ENCODE measurements at regions of chr9 and their contacts with region 1.

Region 1: GRCh38 chr9:2014696-2015580 is at the start of gene SMARCA2:
- DNase-seq: peak; percentile 95 to 98 (median 97)
- H3K4me3 ChIP-seq: peak within 1 kb of the TSS; percentile 92
- H3K4me3 Mint-ChIP-seq: peak within 1 kb of the TSS; percentile 96 to 100 (median 99)
- H3K27ac ChIP-seq: peak within 1 kb of the TSS; percentile 91
- H3K27ac Mint-ChIP-seq: peak within 1 kb of the TSS; percentile 96 to 100 (median 99)
- H3K4me1 ChIP-seq: peaks cover 19% of the 10 kb centered on the region
- H3K4me1 Mint-ChIP-seq: peaks cover 25 to 41% (median 35%) of the 10 kb centered on the region in 3 donors
- H3K27me3 ChIP-seq: no peaks in the 10 kb centered on the region
- H3K27me3 Mint-ChIP-seq: peaks cover 4% of the 10 kb centered on the region in 2 donors
- total RNA-seq, gene SMARCA2: 145 to 156 TPM

Region 2: DNA sequence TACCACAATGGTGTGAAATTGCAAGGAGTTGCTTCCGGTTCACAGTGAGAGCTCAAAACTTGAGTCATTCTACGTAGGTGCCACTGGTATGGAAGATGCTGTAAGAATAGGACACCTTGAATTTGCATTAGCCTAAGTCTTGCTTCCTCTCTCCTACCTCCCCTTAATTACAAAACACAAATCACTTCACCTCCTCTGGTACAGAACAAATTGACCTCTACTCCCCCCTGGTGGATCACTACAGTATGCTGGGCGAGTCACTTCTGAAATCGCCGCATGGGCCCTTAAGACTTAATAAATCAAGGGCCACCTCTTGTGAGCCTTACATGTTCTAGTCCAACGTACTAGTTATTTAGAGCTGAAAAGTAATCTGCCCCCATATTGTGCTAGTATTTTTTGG is 145.1 kb before region 1 on chr9:
- CTCF ChIA-PET with region 1: no interaction called
- POLR2A ChIA-PET with region 1: no interaction called
- DNase-seq: peak in 1 of 5 donors; percentile 8
- H3K4me3 ChIP-seq: no peak overlapping the region
- H3K4me3 Mint-ChIP-seq: no peak overlapping the region
- H3K27ac ChIP-seq: no peak overlapping the region
- H3K27ac Mint-ChIP-seq: no peak overlapping the region
- H3K4me1 ChIP-seq: no peaks in the 10 kb centered on the region
- H3K4me1 Mint-ChIP-seq: peaks cover 1 to 16% (median 9%) of the 10 kb centered on the region in 3 donors
- H3K27me3 ChIP-seq: no peaks in the 10 kb centered on the region
- H3K27me3 Mint-ChIP-seq: peaks cover 0 to 1% of the 10 kb centered on the region in 2 donors

Region 3: DNA sequence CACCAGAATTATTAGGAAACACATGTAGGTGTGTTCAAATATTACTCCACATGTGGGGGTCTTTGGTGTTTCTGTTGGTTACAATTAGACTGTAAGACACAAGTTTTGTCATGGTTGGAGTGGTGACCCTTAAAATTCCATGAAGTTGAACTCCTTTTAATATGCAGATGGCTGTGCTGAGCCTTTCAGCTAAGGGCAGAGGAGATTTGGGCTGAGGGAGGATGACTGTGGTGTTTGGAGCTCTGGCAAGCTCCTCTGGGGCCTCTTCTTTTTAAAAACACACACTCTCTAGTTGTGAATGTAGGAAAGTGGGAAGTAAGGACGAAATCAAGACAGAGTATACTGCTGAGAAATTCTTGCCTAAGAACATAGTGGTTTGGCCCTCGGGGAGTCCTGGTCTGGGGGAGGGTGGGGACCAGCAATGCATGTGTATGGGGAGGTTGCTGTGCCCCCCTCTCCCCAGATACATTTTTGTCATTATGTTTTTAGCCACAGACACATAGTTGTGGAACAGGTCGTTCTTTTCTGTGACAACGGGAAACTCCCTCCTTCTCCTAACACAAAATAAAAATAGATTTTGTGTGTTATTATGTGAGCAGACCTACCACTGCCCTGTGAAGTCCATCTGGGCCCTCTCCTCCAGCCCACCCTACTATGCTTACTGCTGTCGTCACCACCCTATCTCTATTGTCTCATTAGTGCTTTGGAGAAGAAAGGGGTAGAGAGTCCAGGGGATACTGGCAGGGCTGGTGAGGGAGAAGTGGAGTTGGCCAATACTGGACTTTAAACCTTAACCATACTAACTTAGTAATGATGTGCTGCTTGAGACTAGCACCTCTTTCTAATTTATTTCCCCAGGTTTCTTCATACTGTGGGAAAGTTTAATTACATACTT is 10.2 kb after region 1 on chr9:
- CTCF ChIA-PET with region 1: interaction called, 3 read pairs
- POLR2A ChIA-PET with region 1: interaction called, 28 read pairs
- DNase-seq: no peak
- H3K4me3 ChIP-seq: no peak overlapping the region
- H3K4me3 Mint-ChIP-seq: peak overlapping the region; percentile 30 to 80 (median 47)
- H3K27ac ChIP-seq: no peak overlapping the region
- H3K27ac Mint-ChIP-seq: peak overlapping the region; percentile 83 to 97 (median 94)
- H3K4me1 ChIP-seq: peaks cover 92% of the 10 kb centered on the region
- H3K4me1 Mint-ChIP-seq: peaks cover 98 to 100% (median 100%) of the 10 kb centered on the region in 3 donors
- H3K27me3 ChIP-seq: no peaks in the 10 kb centered on the region
- H3K27me3 Mint-ChIP-seq: no peaks in the 10 kb centered on the region

Region 4: GRCh38 chr9:2053883-2054845 is 39.2 kb after region 1 on chr9:
- CTCF ChIA-PET with region 1: interaction called, 11 read pairs
- POLR2A ChIA-PET with region 1: interaction called, 44 read pairs
- DNase-seq: peak; percentile 46 to 85 (median 82)
- H3K4me3 ChIP-seq: no peak overlapping the region
- H3K4me3 Mint-ChIP-seq: peak overlapping the region; percentile 3 to 75 (median 68)
- H3K27ac ChIP-seq: peak overlapping the region; percentile 22
- H3K27ac Mint-ChIP-seq: peak overlapping the region; percentile 81 to 99 (median 95)
- H3K4me1 ChIP-seq: peaks cover 37% of the 10 kb centered on the region
- H3K4me1 Mint-ChIP-seq: peaks cover 41 to 80% (median 65%) of the 10 kb centered on the region in 3 donors
- H3K27me3 ChIP-seq: no peaks in the 10 kb centered on the region
- H3K27me3 Mint-ChIP-seq: no peaks in the 10 kb centered on the region

Measured in CD8-positive, alpha-beta memory T cell (primary cell).